Left cardiac atrium (tissue), 4 donors: ENCODE measurements at regions of chr12 and their contacts with region 1.

Region 1: GRCh38 chr12:47837190-47838171 is 17.8 kb upstream of the HDAC7 start:
- DNase-seq: peak; percentile 74
- ATAC-seq: peak; percentile 67 to 73

Region 2: DNA sequence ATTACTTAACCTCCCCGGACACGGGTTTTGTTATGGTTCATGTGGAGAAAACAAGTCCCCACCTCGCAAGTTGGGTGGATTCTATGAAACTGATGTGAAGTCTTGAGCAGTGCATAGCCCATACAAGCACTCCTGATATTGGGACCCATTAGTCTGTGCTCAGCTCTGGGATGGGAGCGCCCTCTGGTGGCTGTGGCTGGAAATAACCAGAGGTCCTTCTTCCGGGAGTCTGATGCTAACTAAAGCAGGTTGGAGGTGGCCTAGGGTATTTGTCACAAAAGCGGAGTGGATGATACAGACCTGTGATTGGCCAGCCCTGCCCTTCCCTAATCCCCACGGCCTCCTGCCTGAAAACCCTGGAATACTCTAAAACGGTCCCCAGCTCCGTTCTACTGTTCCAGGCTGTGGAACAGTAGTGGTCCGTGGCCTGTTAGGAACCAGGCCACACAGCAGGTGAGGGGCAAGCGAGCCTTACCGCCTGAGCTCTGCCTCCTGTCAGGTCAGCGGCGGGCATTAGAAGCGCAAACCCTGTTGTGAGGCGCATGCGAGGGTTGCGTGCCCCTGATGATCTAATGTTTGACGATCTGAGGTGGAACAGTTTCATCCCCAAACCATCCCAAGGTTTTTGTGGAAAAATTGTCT is 58.1 kb before region 1 on chr12:
- intact Hi-C with region 1: loop called (anchors 2 to 5 kb)
- DNase-seq: peak; percentile 85
- ATAC-seq: peak; percentile 67 to 80

Region 3: DNA sequence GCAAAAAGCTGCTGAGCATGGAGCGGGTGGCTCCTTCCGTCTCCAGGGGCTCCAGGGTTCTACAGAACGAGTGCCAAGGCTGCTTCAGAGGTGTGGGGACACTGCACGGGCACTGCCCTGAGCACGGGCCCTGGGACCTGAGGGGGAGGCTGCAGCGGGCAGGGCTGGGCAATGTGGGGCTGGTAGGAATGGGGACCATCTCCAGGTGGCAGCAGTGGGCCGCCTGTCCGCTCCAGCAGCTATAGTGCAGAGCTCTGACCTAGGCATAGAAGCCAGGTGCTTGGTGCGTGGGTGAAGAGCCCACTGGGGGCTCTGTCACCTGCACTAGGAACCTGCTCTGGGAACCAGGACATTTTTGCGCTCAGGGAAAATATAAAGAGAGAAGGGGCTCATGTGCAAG is 40.0 kb before region 1 on chr12:
- intact Hi-C with region 1: loop called (anchors 5 kb)
- DNase-seq: no peak
- ATAC-seq: no peak

Region 4: DNA sequence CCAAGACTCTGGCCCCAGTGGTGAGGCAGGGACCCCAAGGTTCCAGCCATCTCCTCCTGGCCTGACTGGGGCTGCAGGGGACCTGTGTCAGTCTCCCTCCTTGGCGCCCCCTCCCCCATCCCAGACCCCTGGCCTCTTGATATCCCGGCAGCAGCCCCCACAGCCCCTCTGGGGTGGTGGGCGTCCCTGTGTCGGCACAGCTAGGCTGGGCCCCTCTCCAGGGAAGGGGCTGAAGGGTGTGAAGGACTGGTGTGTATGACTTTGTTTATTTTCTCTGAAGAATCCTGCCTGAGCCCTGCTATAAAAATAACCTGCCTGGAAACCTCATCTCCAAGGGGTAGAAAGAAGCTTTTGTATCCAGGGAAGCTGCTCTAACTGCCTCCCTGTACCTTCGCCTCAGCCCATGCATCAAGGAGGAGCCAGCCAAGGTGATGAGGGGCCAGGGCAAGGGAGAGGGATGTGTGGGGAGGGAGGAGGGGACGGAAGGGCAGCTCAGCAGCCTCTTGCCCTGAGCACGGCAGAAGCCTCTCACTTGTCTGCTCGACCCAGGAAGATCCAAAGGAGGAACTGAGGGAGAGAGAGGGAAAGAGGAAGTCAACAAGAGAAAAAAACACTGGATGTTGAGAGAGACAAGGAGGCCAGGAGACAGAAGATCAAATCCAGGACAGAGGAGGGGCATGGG is 192.2 kb after region 1 on chr12:
- intact Hi-C with region 1: no loop called
- DNase-seq: no peak
- ATAC-seq: no peak

Region 5: DNA sequence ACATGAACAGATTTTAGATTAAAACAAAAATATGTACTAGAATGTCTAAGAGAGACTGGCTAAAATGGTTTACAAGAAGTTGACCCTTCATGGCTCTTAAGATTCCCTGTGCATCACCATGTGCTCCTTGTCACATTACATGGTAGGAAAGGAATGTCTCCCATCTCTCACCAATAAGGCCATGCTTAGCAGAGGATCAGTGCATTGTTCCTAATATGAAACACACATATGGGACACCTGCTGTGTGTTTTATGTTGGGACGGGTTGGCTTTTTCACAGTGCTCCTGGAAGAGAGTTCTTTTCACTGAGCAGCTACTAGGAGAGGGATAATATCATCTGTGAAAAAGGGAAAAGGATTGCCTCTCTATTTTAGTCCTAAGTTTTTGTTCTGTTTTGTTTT is 291.3 kb after region 1 on chr12:
- intact Hi-C with region 1: no loop called
- DNase-seq: no peak
- ATAC-seq: no peak